ENCODE measurements at regions of chr1 and their contacts with region 1.

Region 1: GRCh38 chr1:226679853-226680516 is 59.1 kb downstream of the ITPKB start:
- DNase-seq: peak in 34 of 35 experiments; percentile 40 to 83 (median 68)
- ATAC-seq: peak; percentile 30 to 46 (median 38)
- H3K4me3 ChIP-seq: peak overlapping the region; percentile 37 to 40
- H3K4me3 Mint-ChIP-seq: peak overlapping the region; percentile 73 to 81 (median 81)
- H3K27ac ChIP-seq: peak overlapping the region; percentile 92
- H3K27ac Mint-ChIP-seq: peak overlapping the region; percentile 99
- H3K4me1 ChIP-seq: peaks cover 98% of the 10 kb centered on the region in 2 experiments
- H3K4me1 Mint-ChIP-seq: peaks cover 99 to 100% (median 99%) of the 10 kb centered on the region in 3 donors
- H3K27me3 ChIP-seq: no peaks in the 10 kb centered on the region
- H3K27me3 Mint-ChIP-seq: no peaks in the 10 kb centered on the region

Region 2: GRCh38 chr1:226662642-226663326 is 17.2 kb before region 1 on chr1:
- CTCF ChIA-PET with region 1: interaction called, 5 to 27 read pairs
- POLR2A ChIA-PET with region 1: interaction called, 4 to 7 read pairs
- DNase-seq: peak; percentile 47 to 95 (median 87)
- ATAC-seq: peak; percentile 89 to 91 (median 90)
- H3K4me3 ChIP-seq: peak overlapping the region in 1 of 2 donors; percentile 9
- H3K4me3 Mint-ChIP-seq: peak overlapping the region in 2 of 3 donors; percentile 61 to 66
- H3K27ac ChIP-seq: peak overlapping the region; percentile 94
- H3K27ac Mint-ChIP-seq: peak overlapping the region in 1 of 2 donors; percentile 98
- H3K4me1 ChIP-seq: peaks cover 0 to 92% of the 10 kb centered on the region in 2 experiments
- H3K4me1 Mint-ChIP-seq: peaks cover 0 to 90% (median 0%) of the 10 kb centered on the region in 3 donors
- H3K27me3 ChIP-seq: no peaks in the 10 kb centered on the region
- H3K27me3 Mint-ChIP-seq: no peaks in the 10 kb centered on the region

Region 3: DNA sequence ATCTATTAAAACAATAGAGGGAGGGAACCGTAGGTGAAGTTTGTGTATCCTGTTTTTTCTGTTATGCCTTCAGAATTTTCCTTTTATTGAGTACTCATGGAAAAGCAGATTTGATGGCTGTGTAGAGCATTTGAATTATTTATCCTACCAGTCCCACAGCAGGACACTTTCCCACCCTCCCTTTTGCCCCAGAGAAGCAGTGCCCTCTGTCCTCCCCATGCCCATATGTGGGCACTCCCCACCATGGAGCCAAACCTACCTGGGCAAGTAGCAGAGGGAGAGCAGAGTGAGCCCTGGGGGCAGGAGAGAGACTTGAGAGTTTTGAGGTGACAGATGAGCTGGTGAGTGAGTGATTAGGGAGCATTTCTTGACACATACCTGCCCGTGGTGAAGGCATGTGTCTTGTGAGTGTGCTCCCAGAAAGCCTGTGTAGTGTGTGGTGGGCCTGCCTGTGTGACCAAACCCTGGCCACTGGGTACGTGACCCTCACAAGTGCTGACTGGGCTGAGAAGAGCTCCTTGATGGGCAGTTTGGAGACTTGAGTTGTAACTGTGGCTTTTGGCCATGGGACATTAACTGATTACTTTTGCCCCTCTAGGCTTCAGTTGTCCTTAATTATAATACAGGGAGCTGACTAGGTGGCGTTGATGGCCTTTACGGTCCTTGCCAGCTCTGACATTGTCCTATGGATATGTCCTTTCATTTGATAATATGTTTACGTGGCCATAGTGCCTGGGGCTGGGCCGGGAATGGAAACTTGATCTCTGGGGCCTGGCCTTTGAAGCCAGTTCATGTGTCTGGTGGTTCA is 194.0 kb after region 1 on chr1:
- CTCF ChIA-PET with region 1: interaction called in 1 of 2 experiments, 12 read pairs
- POLR2A ChIA-PET with region 1: no interaction called
- DNase-seq: no peak
- ATAC-seq: no peak
- H3K4me3 ChIP-seq: no peak overlapping the region
- H3K4me3 Mint-ChIP-seq: no peak overlapping the region
- H3K27ac ChIP-seq: no peak overlapping the region
- H3K27ac Mint-ChIP-seq: no peak overlapping the region
- H3K4me1 ChIP-seq: peaks cover 2 to 18% of the 10 kb centered on the region in 2 experiments
- H3K4me1 Mint-ChIP-seq: peaks cover 11 to 20% (median 19%) of the 10 kb centered on the region in 3 donors
- H3K27me3 ChIP-seq: peaks cover 3 to 16% of the 10 kb centered on the region in 2 experiments
- H3K27me3 Mint-ChIP-seq: peaks cover 0 to 11% of the 10 kb centered on the region in 2 donors

Measured in T-cell (primary cell).